ENCODE measurements at regions of chr10 and their contacts with region 1.

Region 1: DNA sequence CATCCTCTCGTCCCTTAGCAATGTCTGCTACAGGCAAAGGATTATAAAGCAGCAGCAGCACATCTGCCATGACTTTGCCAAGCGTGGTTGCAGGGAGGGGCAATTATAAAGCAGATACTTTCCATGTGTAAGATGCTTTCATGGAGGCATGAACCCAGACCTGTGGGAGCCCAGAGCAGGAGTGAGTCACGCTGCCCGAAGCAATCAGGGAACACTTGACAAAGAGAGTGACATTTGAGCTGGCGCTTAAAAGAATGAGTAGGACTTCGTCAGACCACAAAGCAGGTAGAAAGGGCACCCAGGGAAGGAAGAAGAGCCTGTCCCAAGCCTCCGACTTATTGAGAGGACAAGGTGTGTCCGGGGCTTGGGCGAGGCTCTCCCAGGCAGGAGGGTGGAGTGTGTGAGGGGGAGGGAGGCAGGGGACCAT is 147.2 kb downstream of the MYOF start:
- DNase-seq: no peak
- H3K4me3 ChIP-seq: no peak overlapping the region
- CTCF ChIP-seq: no peak

Region 2: GRCh38 chr10:93680412-93681047 is 345.6 kb after region 1 on chr10:
- in situ Hi-C with region 1: loop called (anchors 25 kb)
- DNase-seq: peak; percentile 23
- H3K4me3 ChIP-seq: no peak overlapping the region
- CTCF ChIP-seq: peak; percentile 31